Activated CD8-positive, alpha-beta T cell treated with anti-CD3 and anti-CD28 coated beads for 36 hours (primary cell): ENCODE measurements at regions of chr15 and their contacts with region 1.

Region 1: GRCh38 chr15:51649659-51650521 is 27.3 kb upstream of the DMXL2 start:
- DNase-seq: peak; percentile 52
- ATAC-seq: peak; percentile 84
- H3K4me3 Mint-ChIP-seq: no peak overlapping the region
- H3K27ac Mint-ChIP-seq: no peak overlapping the region
- H3K4me1 Mint-ChIP-seq: no peaks in the 10 kb centered on the region
- H3K27me3 Mint-ChIP-seq: no peaks in the 10 kb centered on the region
- CTCF ChIP-seq: peak; percentile 90

Region 2: DNA sequence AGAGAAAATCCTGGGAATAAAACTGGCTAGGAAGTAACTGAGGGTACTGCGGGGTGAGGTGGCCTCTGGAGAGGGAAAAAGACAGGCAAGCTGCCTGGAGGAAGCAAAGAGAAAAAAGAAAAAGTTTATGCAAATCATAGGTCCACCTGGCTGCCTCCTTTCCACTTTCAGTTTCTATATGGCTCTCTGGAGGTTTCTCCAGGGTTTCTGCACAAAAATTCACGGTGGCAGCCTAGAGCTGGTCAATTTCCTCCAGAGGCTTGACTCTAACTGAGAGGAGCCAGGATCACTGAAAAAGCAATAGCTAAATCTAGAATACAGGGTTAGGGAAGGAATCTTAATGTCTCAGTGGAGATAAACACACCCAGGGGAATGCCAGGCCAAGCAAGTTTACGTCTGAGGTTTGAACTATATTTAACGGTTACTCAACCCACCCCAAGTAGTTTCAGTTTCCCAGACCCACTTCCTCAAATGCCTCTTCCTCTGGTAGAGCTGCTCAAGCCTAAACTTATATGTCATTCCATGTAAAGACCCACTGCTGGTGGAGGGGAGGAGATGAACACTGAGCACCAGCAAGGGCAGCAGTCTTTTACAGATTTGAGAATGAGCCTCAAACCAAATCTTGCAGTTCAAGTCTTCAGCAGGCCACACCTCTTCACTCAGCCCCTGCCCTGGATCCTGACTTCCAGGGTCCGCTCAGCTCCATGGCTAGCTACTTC is 81.8 kb after region 1 on chr15:
- CTCF ChIA-PET with region 1: interaction called, 29 read pairs
- POLR2A ChIA-PET with region 1: no interaction called
- intact Hi-C with region 1: loop called (anchors 5 kb)
- DNase-seq: peak; percentile 46
- ATAC-seq: peak; percentile 37
- H3K4me3 Mint-ChIP-seq: peak overlapping the region; percentile 69
- H3K27ac Mint-ChIP-seq: peak overlapping the region; percentile 89
- H3K4me1 Mint-ChIP-seq: peaks cover 82% of the 10 kb centered on the region
- H3K27me3 Mint-ChIP-seq: no peaks in the 10 kb centered on the region
- CTCF ChIP-seq: no peak

Region 3: GRCh38 chr15:51737280-51738017 is 87.6 kb after region 1 on chr15 and contains the start of gene LYSMD2:
- CTCF ChIA-PET with region 1: interaction called, 29 read pairs
- POLR2A ChIA-PET with region 1: no interaction called
- intact Hi-C with region 1: loop called (anchors 5 kb)
- DNase-seq: peak; percentile 81
- ATAC-seq: peak; percentile 57
- H3K4me3 Mint-ChIP-seq: peak within 1 kb of the TSS; percentile 82
- H3K27ac Mint-ChIP-seq: peak within 1 kb of the TSS; percentile 87
- H3K4me1 Mint-ChIP-seq: peaks cover 47% of the 10 kb centered on the region
- H3K27me3 Mint-ChIP-seq: no peaks in the 10 kb centered on the region
- CTCF ChIP-seq: no peak
- total RNA-seq, gene LYSMD2: 18.5 to 19.0 TPM

Region 4: DNA sequence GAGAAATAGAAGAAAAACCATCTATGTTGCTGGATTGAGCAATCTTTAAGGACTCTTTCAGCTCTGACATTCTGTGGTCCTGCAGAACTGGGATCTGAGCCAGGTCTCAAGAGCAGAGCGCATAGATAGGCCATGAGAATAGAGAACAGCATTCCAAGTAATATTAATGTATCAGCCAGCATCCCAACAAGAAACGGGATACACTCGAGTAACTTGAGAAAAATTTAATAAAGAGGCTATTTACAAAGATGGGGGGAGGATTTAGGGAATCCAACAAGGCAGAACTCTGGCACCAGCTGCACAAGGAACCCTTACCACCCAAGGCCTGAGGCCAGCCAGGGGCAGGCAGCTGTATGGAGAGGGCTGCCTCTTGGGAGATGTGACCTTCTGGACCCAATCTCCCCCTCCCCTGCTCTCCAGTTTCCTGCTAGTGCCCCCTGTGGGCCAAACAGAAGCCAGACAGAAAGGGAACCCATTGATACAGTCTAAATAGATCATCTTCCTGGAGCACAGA is 109.7 kb after region 1 on chr15:
- CTCF ChIA-PET with region 1: interaction called, 14 read pairs
- POLR2A ChIA-PET with region 1: no interaction called
- intact Hi-C with region 1: no loop called
- DNase-seq: no peak
- ATAC-seq: no peak
- H3K4me3 Mint-ChIP-seq: no peak overlapping the region
- H3K27ac Mint-ChIP-seq: no peak overlapping the region
- H3K4me1 Mint-ChIP-seq: peaks cover 2% of the 10 kb centered on the region
- H3K27me3 Mint-ChIP-seq: no peaks in the 10 kb centered on the region
- CTCF ChIP-seq: no peak

Region 5: GRCh38 chr15:51768018-51768417 is 118.1 kb after region 1 on chr15:
- CTCF ChIA-PET with region 1: interaction called, 36 read pairs
- POLR2A ChIA-PET with region 1: no interaction called
- intact Hi-C with region 1: no loop called
- DNase-seq: peak; percentile 25
- ATAC-seq: peak; percentile 76
- H3K4me3 Mint-ChIP-seq: no peak overlapping the region
- H3K27ac Mint-ChIP-seq: peak overlapping the region; percentile 82
- H3K4me1 Mint-ChIP-seq: peaks cover 8% of the 10 kb centered on the region
- H3K27me3 Mint-ChIP-seq: no peaks in the 10 kb centered on the region
- CTCF ChIP-seq: no peak